ENCODE measurements at regions of chr15 and their contacts with region 1.

Region 1: GRCh38 chr15:55407949-55408791 is at the starts of genes CCPG1 and PIERCE2:
- DNase-seq: peak; percentile 89
- H3K4me3 Mint-ChIP-seq: peak within 1 kb of the TSS; percentile 98
- H3K27ac Mint-ChIP-seq: peak within 1 kb of the TSS; percentile 95
- H3K4me1 Mint-ChIP-seq: peaks cover 26% of the 10 kb centered on the region
- H3K27me3 Mint-ChIP-seq: no peaks in the 10 kb centered on the region
- total RNA-seq, gene CCPG1: 15.0 TPM in 2 replicates
- total RNA-seq, gene PIERCE2: not detected in 2 replicates

Region 2: DNA sequence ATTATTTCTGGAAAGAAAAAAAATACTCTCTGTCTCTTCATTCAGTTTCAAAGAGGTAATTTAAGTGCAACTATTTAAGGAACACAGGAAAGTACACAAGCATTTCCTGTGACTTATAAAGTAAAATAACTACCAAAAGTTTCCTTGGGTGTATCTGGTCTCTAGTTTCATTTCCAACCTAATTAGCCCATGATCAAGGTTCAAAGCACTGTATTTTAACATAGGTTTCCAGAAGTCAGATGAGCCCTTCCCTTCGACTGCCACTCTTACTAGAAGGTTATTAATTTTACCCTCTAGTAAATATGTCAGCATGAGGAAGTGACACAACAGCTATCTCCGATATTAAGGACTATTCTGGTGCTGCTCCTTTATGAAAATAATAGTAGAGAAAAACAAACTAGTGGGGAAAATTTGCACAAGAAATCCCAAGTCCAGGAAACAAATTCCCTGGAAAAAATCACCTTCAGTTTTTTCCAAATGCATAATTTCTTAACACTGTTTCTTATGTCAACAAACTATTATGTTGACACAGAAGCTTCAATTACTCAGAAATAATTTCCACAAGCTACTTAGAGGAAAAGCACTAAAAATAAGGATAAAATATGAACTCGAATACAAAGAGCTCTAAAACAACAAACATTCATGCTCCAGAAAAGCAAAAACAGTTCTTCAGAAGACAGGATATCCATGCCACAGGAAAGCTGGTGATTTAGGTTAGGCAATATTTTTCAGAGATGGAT is 35.3 kb before region 1 on chr15:
- intact Hi-C with region 1: loop called (anchors 5 kb)
- DNase-seq: no peak
- H3K4me3 Mint-ChIP-seq: no peak overlapping the region
- H3K27ac Mint-ChIP-seq: peak overlapping the region; percentile 8
- H3K4me1 Mint-ChIP-seq: peaks cover 21% of the 10 kb centered on the region
- H3K27me3 Mint-ChIP-seq: no peaks in the 10 kb centered on the region

Region 3: GRCh38 chr15:55630858-55631257 is 222.7 kb after region 1 on chr15:
- intact Hi-C with region 1: no loop called
- DNase-seq: no peak
- H3K4me3 Mint-ChIP-seq: no peak overlapping the region
- H3K27ac Mint-ChIP-seq: no peak overlapping the region
- H3K4me1 Mint-ChIP-seq: no peaks in the 10 kb centered on the region
- H3K27me3 Mint-ChIP-seq: peaks cover 4% of the 10 kb centered on the region

Region 4: GRCh38 chr15:56180851-56181250 is 772.7 kb after region 1 on chr15:
- intact Hi-C with region 1: no loop called
- DNase-seq: no peak
- H3K4me3 Mint-ChIP-seq: no peak overlapping the region
- H3K27ac Mint-ChIP-seq: no peak overlapping the region
- H3K4me1 Mint-ChIP-seq: peaks cover 23% of the 10 kb centered on the region
- H3K27me3 Mint-ChIP-seq: no peaks in the 10 kb centered on the region

Measured in activated T-helper 1 cell treated with anti-CD3 and anti-CD28 coated beads, Interleukin-12 subunit alpha, Interleukin-12 subunit beta, Interleukin-2, Interleukin-4 antibody, amounts not matched to agents 30 ng/mL and 10 ng/mL and 1 ng/mL, durations not matched to agents 14 hours and 24 hours and 36 hours (primary cell).